Sigmoid colon (tissue), 7 donors: ENCODE measurements at regions of chr15 and their contacts with region 1.

Region 1: GRCh38 chr15:42736793-42737528 is at the start of gene CDAN1:
- DNase-seq: peak; percentile 97
- H3K4me3 ChIP-seq: peak within 1 kb of the TSS; percentile 62 to 96 (median 86)
- H3K27ac ChIP-seq: peak within 1 kb of the TSS; percentile 90 to 95 (median 92)
- H3K4me1 ChIP-seq: peaks cover 0 to 23% (median 21%) of the 10 kb centered on the region in 4 donors
- H3K27me3 ChIP-seq: no peaks in the 10 kb centered on the region
- CTCF ChIP-seq: peak in 1 of 4 experiments; percentile 10
- EP300 ChIP-seq: no peak
- POLR2A ChIP-seq: peak; percentile 25 to 62
- total RNA-seq, gene CDAN1: 7.6 to 11.4 (median 9.8) TPM

Region 2: GRCh38 chr15:42332331-42332730 is 404.6 kb before region 1 on chr15:
- intact Hi-C with region 1: no loop called
- DNase-seq: no peak
- H3K4me3 ChIP-seq: no peak overlapping the region
- H3K27ac ChIP-seq: no peak overlapping the region
- H3K4me1 ChIP-seq: peaks cover 0 to 9% (median 7%) of the 10 kb centered on the region in 4 donors
- H3K27me3 ChIP-seq: no peaks in the 10 kb centered on the region
- CTCF ChIP-seq: no peak
- EP300 ChIP-seq: no peak
- POLR2A ChIP-seq: no peak

Region 3: DNA sequence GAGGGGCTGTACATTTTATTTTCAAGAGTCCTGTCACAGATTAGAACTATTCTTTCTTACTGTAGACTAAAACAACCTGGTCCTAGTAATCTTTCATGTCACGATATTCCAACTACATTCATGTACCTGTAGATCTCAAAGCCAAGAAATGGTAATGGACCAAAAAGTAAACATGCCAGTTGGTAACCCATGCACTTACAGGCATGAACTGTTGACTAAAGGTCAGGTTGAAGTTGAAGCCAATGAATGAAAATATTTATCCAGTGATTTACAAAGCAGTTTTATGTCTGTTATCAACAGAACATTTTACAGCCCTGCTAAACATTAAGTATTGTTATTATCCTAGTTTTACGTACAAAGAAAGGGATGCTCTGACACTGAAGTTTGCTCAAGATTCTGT is 213.6 kb before region 1 on chr15:
- intact Hi-C with region 1: no loop called
- DNase-seq: no peak
- H3K4me3 ChIP-seq: no peak overlapping the region
- H3K27ac ChIP-seq: no peak overlapping the region
- H3K4me1 ChIP-seq: no peaks in the 10 kb centered on the region
- H3K27me3 ChIP-seq: no peaks in the 10 kb centered on the region
- CTCF ChIP-seq: no peak
- EP300 ChIP-seq: no peak
- POLR2A ChIP-seq: no peak

Region 4: DNA sequence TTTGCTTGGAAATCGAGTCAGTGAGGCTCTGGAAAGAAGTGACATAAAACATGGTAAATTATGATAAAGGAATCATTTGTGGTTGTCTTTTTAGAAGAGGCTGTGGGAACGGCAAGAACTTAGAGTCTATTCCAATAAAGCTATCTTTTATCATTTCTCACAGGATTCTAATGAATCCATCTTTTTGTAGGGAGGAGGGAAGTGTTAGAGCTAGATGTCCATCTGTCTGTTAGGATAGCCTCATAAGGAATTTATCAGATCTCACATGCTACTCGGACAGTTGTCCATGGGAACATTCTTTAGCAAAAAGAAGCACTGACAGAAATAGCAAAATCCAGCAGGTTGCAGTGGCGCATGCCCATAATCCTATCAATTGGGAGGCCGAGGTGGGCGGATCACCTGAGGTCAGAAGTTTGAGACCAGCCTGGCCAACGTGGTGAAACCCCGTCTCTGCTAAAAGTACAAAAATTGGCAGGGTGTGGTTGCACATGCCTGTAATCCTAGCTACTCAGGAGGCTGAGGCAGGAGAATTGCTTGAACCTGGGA is 124.5 kb before region 1 on chr15:
- intact Hi-C with region 1: no loop called
- DNase-seq: no peak
- H3K4me3 ChIP-seq: no peak overlapping the region
- H3K27ac ChIP-seq: no peak overlapping the region
- H3K4me1 ChIP-seq: peaks cover 0 to 45% (median 20%) of the 10 kb centered on the region in 4 donors
- H3K27me3 ChIP-seq: no peaks in the 10 kb centered on the region
- CTCF ChIP-seq: no peak
- EP300 ChIP-seq: no peak
- POLR2A ChIP-seq: no peak

Region 5: DNA sequence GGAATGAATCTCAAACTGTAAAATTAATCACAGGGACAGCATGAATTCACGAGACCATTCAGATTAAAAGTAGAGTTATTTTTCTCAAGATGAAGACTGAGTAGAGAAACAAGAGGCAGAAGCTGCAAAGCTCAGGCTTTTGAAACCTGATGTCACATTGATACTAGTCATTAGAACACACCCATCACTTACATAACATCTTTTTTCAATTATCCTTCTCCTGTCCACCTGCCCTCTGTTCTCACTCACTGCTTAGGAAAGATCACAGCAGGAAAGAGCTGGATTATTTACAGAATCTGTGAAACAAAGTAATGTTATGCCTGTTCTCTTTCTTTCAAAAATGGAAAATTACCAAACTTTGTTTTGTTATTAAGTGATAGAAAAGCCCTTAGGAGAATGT is 72.0 kb after region 1 on chr15:
- intact Hi-C with region 1: no loop called
- DNase-seq: no peak
- H3K4me3 ChIP-seq: no peak overlapping the region
- H3K27ac ChIP-seq: no peak overlapping the region
- H3K4me1 ChIP-seq: no peaks in the 10 kb centered on the region
- H3K27me3 ChIP-seq: no peaks in the 10 kb centered on the region
- CTCF ChIP-seq: no peak
- EP300 ChIP-seq: no peak
- POLR2A ChIP-seq: no peak

Region 6: GRCh38 chr15:42920519-42921227 is 183.7 kb after region 1 on chr15 and contains the start of gene TTBK2:
- intact Hi-C with region 1: loop called (anchors 2 kb)
- DNase-seq: peak; percentile 99
- H3K4me3 ChIP-seq: peak within 1 kb of the TSS; percentile 94 to 98 (median 96)
- H3K27ac ChIP-seq: peak within 1 kb of the TSS; percentile 89 to 97 (median 92)
- H3K4me1 ChIP-seq: peaks cover 0 to 23% (median 14%) of the 10 kb centered on the region in 4 donors
- H3K27me3 ChIP-seq: no peaks in the 10 kb centered on the region
- CTCF ChIP-seq: peak in 2 of 4 experiments; percentile 15 to 32
- EP300 ChIP-seq: no peak
- POLR2A ChIP-seq: peak; percentile 57 to 84
- total RNA-seq, gene TTBK2: 16.8 to 24.8 (median 22.7) TPM

Region 7: DNA sequence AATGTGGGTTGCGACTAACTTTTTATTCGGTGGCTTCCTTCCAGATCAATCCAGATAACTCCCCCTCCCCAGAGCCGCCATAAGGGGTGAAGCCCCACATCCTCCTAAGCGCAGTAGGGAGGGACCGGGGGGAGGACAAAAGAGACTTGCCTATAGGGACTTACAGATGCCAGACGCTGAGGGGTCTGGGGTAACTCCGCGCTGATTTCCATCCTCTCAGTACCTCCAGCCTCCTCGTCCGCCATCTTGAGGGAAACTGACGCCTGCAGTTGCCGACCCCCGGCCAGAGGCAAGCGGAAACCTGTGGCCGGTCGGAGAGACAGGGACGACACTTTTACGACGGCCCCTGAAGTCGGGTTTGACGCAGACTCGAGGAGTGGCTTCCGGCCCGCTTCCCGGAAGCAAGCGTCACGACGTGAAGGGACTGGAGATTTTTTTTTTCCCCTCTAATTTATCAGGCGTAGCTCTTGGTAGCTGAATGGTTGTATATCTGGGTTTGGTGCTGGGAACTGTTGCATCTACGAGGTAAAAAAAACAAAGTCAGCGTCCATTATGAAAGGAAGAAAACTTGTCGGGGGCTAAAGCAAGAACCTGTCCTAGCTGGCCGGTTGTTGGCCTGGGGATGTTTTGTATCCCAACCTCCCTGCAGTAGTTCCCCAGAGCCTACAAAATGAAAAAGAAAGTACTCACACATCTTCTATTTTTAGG is 369.0 kb after region 1 on chr15 and contains the start of gene UBR1:
- intact Hi-C with region 1: loop called (anchors 10 kb)
- DNase-seq: peak; percentile 96
- H3K4me3 ChIP-seq: peak within 1 kb of the TSS; percentile 65 to 86 (median 72)
- H3K27ac ChIP-seq: peak within 1 kb of the TSS; percentile 86 to 88 (median 86)
- H3K4me1 ChIP-seq: peaks cover 0 to 32% (median 19%) of the 10 kb centered on the region in 4 donors
- H3K27me3 ChIP-seq: no peaks in the 10 kb centered on the region
- CTCF ChIP-seq: no peak
- EP300 ChIP-seq: peak in 2 of 4 donors; percentile 27 to 46
- POLR2A ChIP-seq: peak; percentile 38 to 45
- total RNA-seq, gene UBR1: 35.3 to 44.7 (median 41.9) TPM